Naive thymus-derived CD8-positive, alpha-beta T cell (primary cell): ENCODE measurements at regions of chr6 and their contacts with region 1.

Region 1: DNA sequence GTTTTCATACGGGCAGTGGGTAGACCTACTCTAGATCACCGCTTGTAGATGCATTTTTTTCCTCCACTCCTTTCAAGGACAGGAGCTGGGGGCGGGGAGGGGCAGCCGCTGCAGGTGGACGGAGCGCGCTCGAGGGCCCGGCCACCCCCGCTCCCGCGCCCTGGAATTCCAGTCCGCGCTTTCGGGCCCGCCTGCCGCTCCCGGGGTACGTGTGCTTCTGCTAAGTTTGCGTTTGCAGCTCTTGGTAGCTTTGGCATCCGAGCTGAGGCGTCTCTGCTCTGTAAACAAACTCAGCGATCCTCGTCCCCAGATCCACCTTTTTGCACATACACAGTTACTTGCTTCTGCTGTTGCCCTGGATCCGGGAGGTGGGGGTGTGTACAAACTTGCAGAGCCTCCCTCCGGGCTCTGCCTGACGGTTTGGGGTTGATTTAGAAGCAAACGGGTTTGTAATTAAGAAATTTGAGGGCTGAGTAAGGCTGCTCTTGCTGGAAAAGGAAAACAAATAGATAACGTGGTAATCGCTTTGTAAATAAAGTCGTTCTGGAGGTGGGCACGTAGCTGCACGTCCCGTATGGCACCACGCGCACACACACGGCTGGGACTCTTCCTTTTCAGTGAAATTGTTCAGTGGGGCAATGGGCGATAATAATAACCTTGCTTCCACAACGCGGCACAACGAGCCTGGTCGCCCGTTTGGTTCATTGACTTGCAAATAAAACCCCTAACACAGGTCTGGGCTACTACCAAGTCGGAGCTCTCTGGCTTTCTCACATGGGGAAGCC is 976 bp upstream of the CITED2 start:
- DNase-seq: peak in 9 of 10 donors; percentile 69 to 92 (median 83)
- ATAC-seq: peak; percentile 62 to 73
- H3K4me3 Mint-ChIP-seq: peak overlapping the region; percentile 91 to 100 (median 100)
- H3K27ac Mint-ChIP-seq: peak overlapping the region; percentile 93 to 100 (median 99)
- H3K4me1 Mint-ChIP-seq: peaks cover 15 to 39% (median 28%) of the 10 kb centered on the region in 4 donors
- H3K27me3 Mint-ChIP-seq: no peaks in the 10 kb centered on the region

Region 2: DNA sequence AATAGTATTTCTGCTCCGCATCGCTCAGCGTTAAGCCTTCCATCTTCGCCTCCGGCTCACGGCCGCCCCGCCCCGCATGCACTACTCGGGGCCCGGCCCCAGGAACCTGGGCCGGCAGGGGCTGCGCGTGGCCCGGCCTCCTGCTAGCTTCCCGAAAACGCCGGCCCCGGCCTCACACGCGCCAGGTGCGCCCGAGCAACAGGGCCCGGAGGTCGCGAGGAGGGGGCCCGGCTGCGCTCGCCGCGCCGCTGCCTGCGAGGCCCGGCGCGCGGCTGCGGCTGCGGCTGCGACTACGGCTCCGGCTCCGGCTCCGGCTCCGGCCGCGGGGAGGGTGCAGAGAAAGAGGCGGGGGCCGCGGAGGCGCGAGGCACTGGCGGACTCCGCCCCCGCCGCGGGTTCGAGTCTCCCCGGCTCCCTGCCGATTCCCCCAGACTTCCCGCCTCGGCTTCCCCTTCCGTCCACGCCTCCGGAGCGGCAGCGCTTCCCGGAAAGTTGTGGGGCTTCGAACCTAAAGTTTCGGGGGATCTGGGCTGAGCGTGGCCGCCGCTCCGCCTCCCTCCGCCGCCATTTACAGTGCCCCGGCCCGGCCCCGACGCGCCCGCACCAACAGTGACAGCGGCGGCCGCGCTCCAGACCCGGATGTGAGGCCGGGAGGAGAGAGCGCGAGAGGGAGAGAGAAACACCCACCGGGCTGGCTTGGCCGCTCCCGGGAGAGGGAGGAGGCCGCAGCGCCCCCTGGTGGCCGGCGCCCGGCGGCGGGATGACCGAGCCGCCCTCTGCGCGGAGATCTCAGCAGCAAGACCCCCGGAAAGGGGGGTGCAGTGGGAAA is 387.6 kb before region 1 on chr6 and contains the start of gene REPS1:
- POLR2A ChIA-PET with region 1: interaction called, 46 read pairs
- DNase-seq: peak; percentile 85 to 96 (median 92)
- ATAC-seq: peak; percentile 84 to 87
- H3K4me3 Mint-ChIP-seq: peak within 1 kb of the TSS in 9 of 10 donors; percentile 87 to 96 (median 91)
- H3K27ac Mint-ChIP-seq: peak within 1 kb of the TSS in 9 of 10 donors; percentile 61 to 96 (median 93)
- H3K4me1 Mint-ChIP-seq: peaks cover 8 to 23% (median 15%) of the 10 kb centered on the region in 4 donors
- H3K27me3 Mint-ChIP-seq: no peaks in the 10 kb centered on the region
- polyA plus RNA-seq, gene REPS1: 19.4 to 45.3 (median 28.4) TPM

Region 3: DNA sequence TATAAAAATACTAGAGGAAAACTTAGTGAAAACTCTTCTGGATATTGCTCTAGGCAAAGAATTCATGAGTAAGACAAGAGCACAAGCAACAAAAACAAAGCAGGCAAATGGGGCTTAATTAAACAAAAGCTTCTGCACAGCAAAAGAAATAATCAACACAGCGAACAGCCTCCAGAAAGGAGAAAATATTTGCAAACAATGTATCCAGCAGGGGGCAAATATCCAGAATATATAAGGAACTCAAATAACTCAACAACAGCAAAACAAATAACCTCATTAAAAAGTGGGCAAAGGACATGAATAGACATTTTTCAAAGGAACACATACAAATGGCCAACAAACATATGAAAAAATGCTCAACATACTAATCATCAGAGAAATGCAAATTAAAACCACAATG is 257.7 kb before region 1 on chr6:
- POLR2A ChIA-PET with region 1: interaction called, 49 read pairs
- DNase-seq: no peak
- ATAC-seq: no peak
- H3K4me3 Mint-ChIP-seq: peak overlapping the region in 7 of 10 donors; percentile 15 to 65 (median 48)
- H3K27ac Mint-ChIP-seq: peak overlapping the region; percentile 5 to 91 (median 68)
- H3K4me1 Mint-ChIP-seq: peaks cover 25 to 52% (median 49%) of the 10 kb centered on the region in 4 donors
- H3K27me3 Mint-ChIP-seq: no peaks in the 10 kb centered on the region

Region 4: GRCh38 chr6:139161817-139162284 is 213.6 kb before region 1 on chr6:
- POLR2A ChIA-PET with region 1: interaction called, 21 read pairs
- DNase-seq: peak; percentile 25 to 76 (median 60)
- ATAC-seq: peak; percentile 53 to 65
- H3K4me3 Mint-ChIP-seq: peak overlapping the region; percentile 70 to 95 (median 83)
- H3K27ac Mint-ChIP-seq: peak overlapping the region; percentile 85 to 97 (median 94)
- H3K4me1 Mint-ChIP-seq: peaks cover 51 to 95% (median 91%) of the 10 kb centered on the region in 4 donors
- H3K27me3 Mint-ChIP-seq: no peaks in the 10 kb centered on the region

Region 5: GRCh38 chr6:139323511-139324300 is 51.7 kb before region 1 on chr6:
- POLR2A ChIA-PET with region 1: interaction called, 27 read pairs
- DNase-seq: peak; percentile 58 to 94 (median 84)
- ATAC-seq: peak; percentile 86 to 87
- H3K4me3 Mint-ChIP-seq: peak overlapping the region; percentile 85 to 97 (median 88)
- H3K27ac Mint-ChIP-seq: peak overlapping the region; percentile 97 to 100 (median 99)
- H3K4me1 Mint-ChIP-seq: peaks cover 19 to 41% (median 33%) of the 10 kb centered on the region in 4 donors
- H3K27me3 Mint-ChIP-seq: no peaks in the 10 kb centered on the region